GM10248 (cell line): ENCODE measurements at regions of chr14 and their contacts with region 1.

Region 1: GRCh38 chr14:75906676-75907280 is 75.0 kb downstream of the TGFB3 start:
- DNase-seq: peak; percentile 62
- CTCF ChIP-seq: peak; percentile 72

Region 2: DNA sequence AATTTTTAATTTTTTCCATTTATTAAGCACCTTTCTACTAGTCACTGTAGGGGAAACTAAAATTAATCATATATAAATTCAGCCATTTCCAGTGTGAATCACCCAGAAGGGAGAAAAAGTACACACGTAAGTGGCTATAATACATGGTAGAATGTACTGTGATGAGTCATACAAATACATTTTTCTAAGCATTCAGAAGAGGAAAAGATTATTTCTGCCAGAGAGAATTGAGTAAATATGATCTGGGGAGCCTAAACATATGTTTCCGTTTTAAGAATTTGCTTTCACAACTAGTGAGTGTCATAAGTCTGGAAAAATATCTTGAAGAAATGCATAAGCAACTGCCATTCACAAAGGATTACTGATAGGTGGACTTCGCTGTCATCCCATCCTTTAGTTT is 27.7 kb before region 1 on chr14:
- CTCF ChIA-PET with region 1: interaction called, 28 read pairs
- POLR2A ChIA-PET with region 1: no interaction called
- DNase-seq: peak; percentile 18
- CTCF ChIP-seq: no peak

Region 3: GRCh38 chr14:75896341-75896740 is 10.4 kb before region 1 on chr14:
- CTCF ChIA-PET with region 1: interaction called, 43 read pairs
- POLR2A ChIA-PET with region 1: no interaction called
- DNase-seq: no peak
- CTCF ChIP-seq: no peak

Region 4: GRCh38 chr14:75941030-75941429 is 34.3 kb after region 1 on chr14:
- CTCF ChIA-PET with region 1: interaction called, 27 read pairs
- POLR2A ChIA-PET with region 1: no interaction called
- DNase-seq: no peak
- CTCF ChIP-seq: no peak

Region 5: GRCh38 chr14:75968456-75968855 is 61.7 kb after region 1 on chr14:
- CTCF ChIA-PET with region 1: interaction called, 18 read pairs
- POLR2A ChIA-PET with region 1: no interaction called
- DNase-seq: no peak
- CTCF ChIP-seq: no peak

Region 6: GRCh38 chr14:75982266-75983018 is 75.7 kb after region 1 on chr14:
- CTCF ChIA-PET with region 1: interaction called, 167 read pairs
- POLR2A ChIA-PET with region 1: no interaction called
- DNase-seq: peak; percentile 82
- CTCF ChIP-seq: peak; percentile 84

Region 7: DNA sequence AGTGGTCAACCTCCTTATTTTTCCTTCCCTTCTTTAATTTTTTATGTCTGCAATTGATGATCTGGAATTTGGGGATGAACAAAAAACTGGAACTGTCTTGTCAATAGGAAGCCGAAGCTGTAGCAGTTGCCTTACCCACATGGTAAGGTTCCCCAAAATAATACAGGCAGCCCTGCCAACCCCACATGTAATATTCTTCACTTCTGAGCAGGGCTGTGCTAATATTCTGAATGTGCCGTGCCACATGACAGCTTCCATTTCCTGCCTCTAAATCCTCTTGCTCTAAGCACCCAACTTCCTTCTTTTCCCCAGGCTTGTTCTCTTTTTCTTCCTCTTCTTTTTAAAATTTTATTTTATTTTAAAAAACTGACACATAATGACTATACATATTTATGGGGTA is 284.5 kb after region 1 on chr14:
- CTCF ChIA-PET with region 1: no interaction called
- POLR2A ChIA-PET with region 1: no interaction called
- DNase-seq: no peak
- CTCF ChIP-seq: no peak